ENCODE measurements at regions of chr11 and their contacts with region 1.

Region 1: GRCh38 chr11:66677599-66678375 is at the start of gene RBM4B:
- DNase-seq: peak; percentile 98
- H3K4me3 ChIP-seq: peak within 1 kb of the TSS; percentile 58 to 84 (median 72)
- H3K27ac ChIP-seq: peak within 1 kb of the TSS; percentile 85 to 97 (median 94)
- H3K4me1 ChIP-seq: peaks cover 35 to 58% (median 44%) of the 10 kb centered on the region in 6 donors
- H3K27me3 ChIP-seq: no peaks in the 10 kb centered on the region
- CTCF ChIP-seq: peak in 3 of 11 experiments; percentile 14 to 53 (median 28)
- POLR2A ChIP-seq: peak; percentile 11 to 79 (median 72)
- total RNA-seq, gene RBM4B: 16.3 to 23.0 (median 18.8) TPM

Region 2: DNA sequence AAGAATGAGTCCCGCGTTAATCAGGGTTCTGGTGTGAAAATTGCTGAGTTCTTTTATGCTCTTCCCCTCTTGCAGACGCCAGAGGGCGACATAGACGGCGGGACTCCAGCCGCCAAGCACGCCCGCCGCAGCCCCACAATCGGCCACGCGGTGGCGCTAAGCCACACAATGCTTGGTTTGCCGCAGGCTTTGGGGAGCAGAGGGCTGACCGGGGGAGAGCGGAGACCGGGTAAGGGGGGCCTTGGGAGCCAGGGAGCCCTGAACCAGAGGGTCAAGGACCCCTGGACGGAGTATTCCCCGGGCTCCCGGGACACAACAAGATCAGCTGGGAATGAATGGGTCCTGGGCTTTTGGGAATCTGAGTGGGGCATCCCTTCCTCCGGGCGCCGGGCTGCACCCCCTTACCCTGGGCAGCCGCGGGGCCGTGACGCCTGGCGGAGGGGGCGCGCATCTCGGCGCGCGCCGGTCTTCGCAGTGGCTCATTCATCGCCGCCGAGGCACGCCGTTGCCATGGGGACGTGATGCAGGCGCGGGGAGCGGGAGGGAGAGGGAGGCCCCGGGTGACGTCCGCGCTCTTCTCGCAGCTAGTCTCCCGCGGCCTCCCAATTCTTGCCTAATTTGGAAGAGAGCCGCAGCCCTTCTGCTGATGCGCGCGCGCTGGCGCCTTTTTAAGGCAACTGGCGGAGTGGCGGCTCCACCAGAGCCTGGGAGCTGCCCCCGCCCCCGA is 269.1 kb before region 1 on chr11:
- intact Hi-C with region 1: loop called (anchors 5 kb)
- DNase-seq: peak; percentile 97
- H3K4me3 ChIP-seq: peak overlapping the region; percentile 3 to 63 (median 36)
- H3K27ac ChIP-seq: peak overlapping the region in 1 of 8 donors; percentile 26
- H3K4me1 ChIP-seq: peaks cover 5 to 16% (median 10%) of the 10 kb centered on the region in 6 donors
- H3K27me3 ChIP-seq: peaks cover 0 to 77% (median 21%) of the 10 kb centered on the region in 7 donors
- CTCF ChIP-seq: peak; percentile 99 to 100 (median 100)
- POLR2A ChIP-seq: no peak

Region 3: GRCh38 chr11:66556086-66556485 is 121.7 kb before region 1 on chr11:
- intact Hi-C with region 1: no loop called
- DNase-seq: no peak
- H3K4me3 ChIP-seq: no peak overlapping the region
- H3K27ac ChIP-seq: no peak overlapping the region
- H3K4me1 ChIP-seq: peaks cover 4 to 11% (median 8%) of the 10 kb centered on the region in 6 donors
- H3K27me3 ChIP-seq: peaks cover 0 to 42% (median 0%) of the 10 kb centered on the region in 7 donors
- CTCF ChIP-seq: no peak
- POLR2A ChIP-seq: no peak

Region 4: GRCh38 chr11:66579017-66579606 is 98.7 kb before region 1 on chr11:
- intact Hi-C with region 1: loop called (anchors 2 kb)
- DNase-seq: peak; percentile 90
- H3K4me3 ChIP-seq: peak overlapping the region in 1 of 8 donors; percentile 34
- H3K27ac ChIP-seq: no peak overlapping the region
- H3K4me1 ChIP-seq: peaks cover 2 to 9% (median 8%) of the 10 kb centered on the region in 6 donors
- H3K27me3 ChIP-seq: no peaks in the 10 kb centered on the region
- CTCF ChIP-seq: peak; percentile 63 to 88 (median 85)
- POLR2A ChIP-seq: no peak

Measured in spleen (tissue), 13 donors.